PC-9 (cell line): ENCODE measurements at regions of chr9 and their contacts with region 1.

Region 1: GRCh38 chr9:394347-395052 is 179.8 kb downstream of the DOCK8 start:
- DNase-seq: no peak
- H3K4me3 ChIP-seq: no peak overlapping the region
- H3K27ac ChIP-seq: no peak overlapping the region
- H3K4me1 ChIP-seq: no peaks in the 10 kb centered on the region
- H3K27me3 ChIP-seq: no peaks in the 10 kb centered on the region
- CTCF ChIP-seq: no peak

Region 2: GRCh38 chr9:371349-371748 is 23.2 kb before region 1 on chr9:
- CTCF ChIA-PET with region 1: no interaction called
- POLR2A ChIA-PET with region 1: no interaction called
- intact Hi-C with region 1: no loop called
- DNase-seq: no peak
- H3K4me3 ChIP-seq: no peak overlapping the region
- H3K27ac ChIP-seq: no peak overlapping the region
- H3K4me1 ChIP-seq: no peaks in the 10 kb centered on the region
- H3K27me3 ChIP-seq: no peaks in the 10 kb centered on the region
- CTCF ChIP-seq: no peak

Region 3: GRCh38 chr9:530681-531080 is 136.2 kb after region 1 on chr9:
- CTCF ChIA-PET with region 1: no interaction called
- POLR2A ChIA-PET with region 1: interaction called, 16 read pairs
- intact Hi-C with region 1: no loop called
- DNase-seq: peak in 1 of 2 experiments; percentile 8
- H3K4me3 ChIP-seq: no peak overlapping the region
- H3K27ac ChIP-seq: no peak overlapping the region
- H3K4me1 ChIP-seq: no peaks in the 10 kb centered on the region
- H3K27me3 ChIP-seq: no peaks in the 10 kb centered on the region
- CTCF ChIP-seq: no peak

Region 4: DNA sequence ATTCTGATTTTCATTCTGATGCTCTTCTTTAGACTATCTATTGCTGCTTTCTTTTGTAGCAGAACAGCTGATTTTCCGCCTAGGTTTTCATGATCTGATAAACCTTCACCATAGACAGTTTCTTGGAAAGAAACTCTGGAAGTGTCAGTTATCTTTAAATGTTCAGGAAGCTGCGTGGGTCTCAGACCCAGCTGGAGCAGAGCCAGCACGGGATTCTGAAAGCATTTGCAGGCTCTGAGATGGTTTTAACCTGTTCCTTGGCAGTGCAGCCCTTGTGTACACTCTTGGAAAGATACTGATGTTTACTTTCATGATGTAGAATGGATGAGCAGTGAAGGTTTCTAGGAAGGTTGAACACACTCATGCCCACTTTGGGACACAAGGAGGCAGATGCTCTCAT is 269.0 kb after region 1 on chr9:
- CTCF ChIA-PET with region 1: no interaction called
- POLR2A ChIA-PET with region 1: no interaction called
- intact Hi-C with region 1: no loop called
- DNase-seq: no peak
- H3K4me3 ChIP-seq: no peak overlapping the region
- H3K27ac ChIP-seq: no peak overlapping the region
- H3K4me1 ChIP-seq: no peaks in the 10 kb centered on the region
- H3K27me3 ChIP-seq: no peaks in the 10 kb centered on the region
- CTCF ChIP-seq: no peak